Lower leg skin (tissue), 4 donors: ENCODE measurements at regions of chr2 and their contacts with region 1.

Region 1: DNA sequence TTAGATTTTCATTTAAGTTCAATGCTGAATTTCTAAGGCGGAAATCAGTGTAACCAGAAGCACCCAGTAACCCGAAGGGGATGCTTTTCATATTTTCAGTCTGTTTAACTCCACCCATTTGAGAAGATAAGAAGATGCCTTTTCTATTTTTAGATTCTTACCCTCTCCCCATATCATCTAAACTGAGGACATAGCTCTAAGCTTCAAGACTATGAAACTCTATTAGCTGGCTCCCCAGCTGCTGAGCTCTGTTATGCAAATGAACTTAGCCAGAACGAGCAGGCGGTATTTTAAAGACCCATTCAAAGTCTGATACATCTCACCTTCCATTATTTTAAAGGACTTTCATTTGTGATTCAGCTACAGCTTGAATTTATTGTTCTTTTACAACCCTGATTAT is 16.5 kb downstream of the CDC42EP3 start:
- DNase-seq: no peak
- H3K4me3 ChIP-seq: no peak overlapping the region
- CTCF ChIP-seq: no peak
- POLR2A ChIP-seq: no peak

Region 2: GRCh38 chr2:36695746-36696415 is 959.1 kb before region 1 on chr2:
- intact Hi-C with region 1: no loop called
- DNase-seq: no peak
- H3K4me3 ChIP-seq: no peak overlapping the region
- CTCF ChIP-seq: no peak
- POLR2A ChIP-seq: no peak

Region 3: GRCh38 chr2:38159597-38159996 is 504.7 kb after region 1 on chr2:
- intact Hi-C with region 1: loop called (anchors 5 kb)
- DNase-seq: no peak
- H3K4me3 ChIP-seq: no peak overlapping the region
- CTCF ChIP-seq: no peak
- POLR2A ChIP-seq: no peak